HCT116 (cell line): ENCODE measurements at regions of chr2 and their contacts with region 1.

Region 1: GRCh38 chr2:85066874-85067351 is 66.3 kb upstream of the TCF7L1 start:
- DNase-seq: peak; percentile 77
- ATAC-seq: peak; percentile 91
- H3K4me3 ChIP-seq: peak overlapping the region; percentile 31 to 40
- H3K27ac ChIP-seq: no peak overlapping the region
- H3K4me1 ChIP-seq: peaks cover 2 to 13% of the 10 kb centered on the region in 2 experiments; a peak in 3 of 4 replicates
- H3K27me3 ChIP-seq: no peaks in the 10 kb centered on the region
- CTCF ChIP-seq: peak; percentile 85 to 91 (median 90)
- POLR2A ChIP-seq: no peak
- RAD21 ChIP-seq: peak; percentile 91

Region 2: DNA sequence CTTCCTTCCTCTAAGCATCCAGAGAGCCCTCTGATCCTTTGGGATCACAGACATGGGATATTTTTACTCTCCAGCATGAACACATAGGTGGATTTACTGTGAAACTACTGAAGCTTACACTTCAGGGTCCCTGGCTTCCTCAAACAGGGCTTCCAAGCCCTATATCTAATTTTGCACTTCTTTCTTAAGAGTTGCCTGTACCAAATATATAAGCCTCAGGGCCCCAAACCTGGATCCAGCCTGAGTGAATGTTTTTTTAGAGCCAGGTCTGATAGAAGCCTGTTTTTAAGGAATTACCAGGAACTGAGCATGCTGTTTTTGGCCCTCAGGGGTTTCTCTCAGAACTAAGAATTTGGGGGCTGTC is 109.2 kb before region 1 on chr2:
- CTCF ChIA-PET with region 1: no interaction called
- POLR2A ChIA-PET with region 1: no interaction called
- RAD21 ChIA-PET with region 1: no interaction called
- intact Hi-C with region 1: no loop called
- DNase-seq: no peak
- ATAC-seq: no peak
- H3K4me3 ChIP-seq: peak overlapping the region in 1 of 2 experiments; percentile 45; a peak in 3 of 4 replicates
- H3K27ac ChIP-seq: peak overlapping the region; percentile 83
- H3K4me1 ChIP-seq: peaks cover 42 to 58% of the 10 kb centered on the region in 2 experiments
- H3K27me3 ChIP-seq: no peaks in the 10 kb centered on the region
- CTCF ChIP-seq: no peak
- POLR2A ChIP-seq: no peak
- RAD21 ChIP-seq: no peak

Region 3: DNA sequence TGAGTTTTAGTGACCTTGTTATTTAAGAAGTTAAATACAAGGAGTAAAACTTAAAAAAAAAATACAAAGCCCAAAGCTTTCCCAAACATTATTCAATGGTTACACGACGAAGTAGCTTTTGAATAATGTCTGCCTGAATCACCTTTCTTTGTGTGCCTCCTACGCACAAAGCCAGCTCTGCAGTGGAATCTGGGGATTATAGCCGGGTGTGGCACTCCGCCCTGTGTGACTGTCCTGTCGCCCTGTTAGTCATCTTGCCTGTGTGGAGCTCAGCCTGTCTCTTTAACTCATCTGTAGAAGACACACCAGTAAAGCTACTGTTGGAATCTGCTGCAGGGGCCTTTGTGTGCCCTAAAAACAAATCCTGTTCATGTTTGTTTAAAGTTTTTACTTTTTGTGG is 13.1 kb before region 1 on chr2:
- CTCF ChIA-PET with region 1: interaction called, 11 read pairs
- POLR2A ChIA-PET with region 1: no interaction called
- RAD21 ChIA-PET with region 1: interaction called in 1 of 2 experiments, 4 read pairs
- intact Hi-C with region 1: no loop called
- DNase-seq: peak; percentile 91
- ATAC-seq: peak; percentile 99
- H3K4me3 ChIP-seq: peak overlapping the region; percentile 24 to 44
- H3K27ac ChIP-seq: peak overlapping the region; percentile 46; the same call in 1 of the 2 replicates
- H3K4me1 ChIP-seq: peaks cover 27 to 47% of the 10 kb centered on the region in 2 experiments
- H3K27me3 ChIP-seq: no peaks in the 10 kb centered on the region
- CTCF ChIP-seq: no peak
- POLR2A ChIP-seq: no peak
- RAD21 ChIP-seq: 0 out of 2 replicates have a peak, but pooled peaks have one; percentile 26

Region 4: DNA sequence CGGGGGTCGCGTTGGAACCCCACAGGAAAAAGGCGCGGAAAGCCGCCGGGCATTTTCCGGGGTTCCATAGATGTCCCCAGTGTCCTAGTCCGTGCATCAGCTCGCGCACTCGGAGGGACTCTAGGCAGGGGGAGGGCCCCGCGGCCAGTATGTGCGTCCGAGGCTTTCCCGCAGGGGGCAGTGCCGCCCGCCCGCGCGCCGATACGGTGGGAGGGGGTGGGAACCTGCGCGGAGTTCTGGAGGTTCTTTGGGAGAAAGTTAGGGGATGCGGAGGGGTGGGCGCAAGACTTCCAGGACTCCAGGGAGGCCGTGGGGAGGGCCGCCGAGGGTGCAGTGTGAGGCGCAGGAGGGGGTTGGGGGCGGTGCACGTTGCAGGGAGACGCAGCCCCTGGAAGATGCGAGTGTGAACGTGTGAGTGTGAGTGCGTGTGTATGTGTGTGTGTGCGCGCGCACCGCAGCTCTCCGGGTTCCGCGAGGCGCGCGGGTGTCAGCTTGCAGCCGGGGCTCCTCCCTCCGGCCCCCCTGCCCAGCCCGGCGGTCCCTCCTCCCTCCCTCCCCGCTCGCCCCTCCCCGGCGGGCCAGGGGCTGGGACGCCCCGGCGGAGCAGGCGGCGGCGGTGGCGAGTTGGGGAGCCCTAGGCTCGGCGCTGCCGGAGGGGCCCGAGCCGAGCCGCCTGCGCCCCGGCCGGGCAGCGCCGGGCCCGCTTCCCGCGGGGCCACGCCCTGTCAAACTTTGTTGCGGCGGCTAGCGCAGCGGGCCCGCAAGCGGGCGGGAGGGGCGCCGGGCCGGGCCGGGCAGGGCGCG is 66.1 kb after region 1 on chr2 and contains the start of gene TCF7L1:
- CTCF ChIA-PET with region 1: interaction called, 4 read pairs
- POLR2A ChIA-PET with region 1: no interaction called
- RAD21 ChIA-PET with region 1: interaction called, 3 to 5 read pairs
- intact Hi-C with region 1: loop called (anchors 5 kb)
- DNase-seq: peak; percentile 70
- ATAC-seq: peak; percentile 92
- H3K4me3 ChIP-seq: peak within 1 kb of the TSS; percentile 63 to 71
- H3K27ac ChIP-seq: peak within 1 kb of the TSS; percentile 42; the same call in 1 of the 2 replicates
- H3K4me1 ChIP-seq: peaks cover 12 to 22% of the 10 kb centered on the region in 2 experiments; a peak in 3 of 4 replicates
- H3K27me3 ChIP-seq: no peaks in the 10 kb centered on the region
- CTCF ChIP-seq: peak; percentile 58 to 83 (median 81); a peak in 5 of 6 replicates
- POLR2A ChIP-seq: peak; percentile 22
- RAD21 ChIP-seq: peak; percentile 75
- total RNA-seq, gene TCF7L1: 10.3 TPM

Region 5: DNA sequence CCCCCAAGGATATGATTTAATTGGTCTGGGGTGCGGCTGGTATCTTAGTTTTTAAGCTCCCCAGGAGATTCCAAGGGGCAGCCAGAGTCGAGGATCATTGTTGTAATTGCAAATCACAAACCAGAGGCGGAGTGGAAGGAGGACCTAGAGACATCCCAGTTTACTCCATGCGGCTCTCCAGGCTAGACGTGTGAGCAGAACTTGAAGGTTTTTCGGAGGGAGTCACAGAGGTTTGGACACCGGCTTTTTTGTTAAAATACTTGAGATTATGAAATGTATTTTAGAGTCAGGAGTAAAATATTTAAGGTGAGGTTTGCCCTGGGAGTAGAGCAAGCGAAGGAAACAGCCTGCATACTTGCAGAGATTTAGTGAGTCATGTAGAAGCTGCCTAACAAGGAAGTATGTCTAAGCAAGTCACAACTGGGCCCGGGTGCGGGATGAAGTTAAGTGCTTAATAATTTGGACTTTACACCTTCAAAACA is 221.4 kb after region 1 on chr2:
- CTCF ChIA-PET with region 1: interaction called, 43 read pairs
- POLR2A ChIA-PET with region 1: no interaction called
- RAD21 ChIA-PET with region 1: interaction called, 6 to 13 read pairs
- intact Hi-C with region 1: loop called (anchors 1 kb)
- DNase-seq: peak; percentile 23
- ATAC-seq: no peak
- H3K4me3 ChIP-seq: no peak overlapping the region
- H3K27ac ChIP-seq: peak overlapping the region; percentile 41; the same call in 1 of the 2 replicates
- H3K4me1 ChIP-seq: peaks cover 11 to 22% of the 10 kb centered on the region in 2 experiments; a peak in 3 of 4 replicates
- H3K27me3 ChIP-seq: no peaks in the 10 kb centered on the region
- CTCF ChIP-seq: no peak
- POLR2A ChIP-seq: no peak
- RAD21 ChIP-seq: no peak

Region 6: DNA sequence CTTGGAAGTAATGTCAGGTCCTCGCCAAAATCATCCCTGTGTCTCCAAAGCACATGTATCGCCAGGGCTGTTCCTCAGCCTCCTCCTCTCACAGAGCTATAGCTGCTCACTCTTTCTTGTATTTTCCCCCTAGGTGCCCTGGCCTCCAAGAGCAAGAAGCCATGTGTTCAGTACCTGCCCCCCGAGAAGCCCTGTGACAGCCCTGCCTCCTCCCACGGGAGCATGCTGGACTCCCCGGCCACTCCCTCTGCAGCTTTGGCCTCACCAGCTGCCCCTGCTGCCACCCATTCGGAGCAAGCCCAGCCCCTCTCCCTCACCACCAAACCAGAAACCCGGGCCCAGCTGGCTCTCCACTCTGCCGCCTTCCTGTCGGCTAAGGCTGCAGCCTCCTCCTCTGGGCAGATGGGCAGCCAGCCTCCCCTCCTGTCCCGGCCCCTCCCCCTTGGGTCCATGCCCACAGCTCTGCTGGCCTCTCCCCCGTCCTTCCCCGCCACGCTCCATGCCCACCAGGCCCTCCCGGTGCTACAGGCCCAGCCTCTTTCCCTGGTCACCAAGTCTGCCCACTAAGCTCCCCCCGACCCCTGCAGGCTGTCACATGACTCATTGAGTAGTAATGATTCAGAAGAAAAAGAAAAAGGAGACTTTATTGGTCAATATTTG is 242.1 kb after region 1 on chr2:
- CTCF ChIA-PET with region 1: no interaction called
- POLR2A ChIA-PET with region 1: no interaction called
- RAD21 ChIA-PET with region 1: no interaction called
- intact Hi-C with region 1: no loop called
- DNase-seq: no peak
- ATAC-seq: peak; percentile 21; the same call in 1 of the 2 replicates
- H3K4me3 ChIP-seq: no peak overlapping the region
- H3K27ac ChIP-seq: no peak overlapping the region
- H3K4me1 ChIP-seq: no peaks in the 10 kb centered on the region
- H3K27me3 ChIP-seq: no peaks in the 10 kb centered on the region
- CTCF ChIP-seq: no peak
- POLR2A ChIP-seq: no peak
- RAD21 ChIP-seq: no peak